MCF 10A (cell line): ENCODE measurements at regions of chrX and their contacts with region 1.

Region 1: DNA sequence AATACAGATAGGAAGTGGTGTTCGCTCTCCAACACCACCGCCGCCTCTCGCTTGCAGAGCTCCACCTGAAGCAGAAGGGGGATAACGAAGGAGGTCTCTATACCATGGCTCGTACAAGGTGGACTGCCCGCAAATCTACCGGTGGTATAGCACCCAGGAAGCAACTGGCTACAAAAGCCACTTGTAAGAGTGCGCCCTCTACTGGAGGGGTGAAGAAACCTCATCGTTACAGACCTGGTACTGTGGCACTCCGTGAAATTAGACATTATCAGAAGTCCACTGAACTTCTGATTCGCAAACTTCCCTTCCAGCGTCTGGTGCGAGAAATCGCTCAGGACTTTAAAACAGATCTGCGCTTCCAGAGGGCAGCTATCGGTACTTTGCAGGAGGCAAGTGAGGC is 5.2 kb upstream of the BMP15 start:
- DNase-seq: peak; percentile 34
- H3K4me3 Mint-ChIP-seq: no peak overlapping the region
- H3K27ac Mint-ChIP-seq: no peak overlapping the region
- H3K4me1 Mint-ChIP-seq: no peaks in the 10 kb centered on the region
- H3K27me3 Mint-ChIP-seq: peaks cover 13% of the 10 kb centered on the region
- CTCF ChIP-seq: peak; percentile 65

Region 2: DNA sequence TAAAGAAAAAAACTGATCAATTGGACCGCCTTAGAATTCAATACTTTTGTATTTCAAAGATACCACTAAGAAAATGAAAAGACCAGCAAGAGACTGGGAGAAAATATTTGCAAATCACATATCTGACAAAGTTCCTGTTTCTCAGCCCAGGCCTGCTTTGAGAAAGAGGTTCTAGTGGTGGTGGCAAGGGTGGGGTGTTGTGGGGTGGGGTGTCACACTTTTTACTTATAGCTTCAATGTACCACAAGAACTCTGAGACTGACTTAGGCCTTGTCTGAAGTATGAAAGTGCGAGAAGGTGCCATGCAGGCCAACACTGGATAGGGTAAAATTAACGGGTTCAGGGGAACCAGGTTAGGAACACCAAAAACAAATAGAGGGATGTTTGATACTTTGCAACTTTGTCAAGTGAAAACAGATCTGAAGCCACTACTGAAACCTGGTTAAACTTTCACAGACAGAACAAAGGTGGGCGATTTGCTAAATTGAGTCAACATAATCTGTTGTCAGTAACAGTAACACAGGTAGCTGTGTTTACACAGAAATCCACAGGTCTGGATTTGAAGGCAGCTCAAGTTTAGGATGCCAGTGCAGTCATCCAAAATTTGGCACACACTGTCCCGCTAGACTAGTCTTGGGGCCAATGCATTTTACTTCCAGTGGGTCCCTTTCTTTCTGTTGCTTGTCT is 523.5 kb before region 1 on chrX:
- CTCF ChIA-PET with region 1: no interaction called
- POLR2A ChIA-PET with region 1: no interaction called
- intact Hi-C with region 1: no loop called
- DNase-seq: no peak
- H3K4me3 Mint-ChIP-seq: no peak overlapping the region
- H3K27ac Mint-ChIP-seq: no peak overlapping the region
- H3K4me1 Mint-ChIP-seq: no peaks in the 10 kb centered on the region
- H3K27me3 Mint-ChIP-seq: peaks cover 81% of the 10 kb centered on the region
- CTCF ChIP-seq: no peak

Region 3: DNA sequence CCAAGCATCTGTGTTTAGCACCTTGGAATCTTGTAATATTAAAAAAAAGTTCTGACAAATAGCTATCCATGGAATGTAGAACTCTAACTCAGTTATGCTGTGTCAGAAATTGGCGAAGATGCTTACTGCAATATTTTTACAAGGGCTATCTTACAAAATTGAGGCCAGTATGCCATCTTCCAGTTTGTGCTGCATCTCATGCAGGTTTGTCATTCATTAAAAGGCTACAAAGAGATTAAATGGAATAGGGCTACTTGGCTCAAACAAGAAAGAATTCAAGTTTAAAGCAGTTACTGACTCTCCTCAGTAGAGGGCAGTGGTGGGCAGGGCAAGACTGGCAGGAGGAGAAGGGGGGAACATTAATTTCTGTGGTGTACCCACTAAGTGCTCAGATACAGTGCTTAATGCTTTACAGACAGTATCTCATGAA is 157.8 kb before region 1 on chrX:
- CTCF ChIA-PET with region 1: interaction called, 113 read pairs
- POLR2A ChIA-PET with region 1: interaction called, 3 read pairs
- intact Hi-C with region 1: loop called (anchors 1 kb)
- DNase-seq: peak; percentile 47
- H3K4me3 Mint-ChIP-seq: no peak overlapping the region
- H3K27ac Mint-ChIP-seq: no peak overlapping the region
- H3K4me1 Mint-ChIP-seq: no peaks in the 10 kb centered on the region
- H3K27me3 Mint-ChIP-seq: peaks cover 86% of the 10 kb centered on the region
- CTCF ChIP-seq: peak; percentile 85

Region 4: DNA sequence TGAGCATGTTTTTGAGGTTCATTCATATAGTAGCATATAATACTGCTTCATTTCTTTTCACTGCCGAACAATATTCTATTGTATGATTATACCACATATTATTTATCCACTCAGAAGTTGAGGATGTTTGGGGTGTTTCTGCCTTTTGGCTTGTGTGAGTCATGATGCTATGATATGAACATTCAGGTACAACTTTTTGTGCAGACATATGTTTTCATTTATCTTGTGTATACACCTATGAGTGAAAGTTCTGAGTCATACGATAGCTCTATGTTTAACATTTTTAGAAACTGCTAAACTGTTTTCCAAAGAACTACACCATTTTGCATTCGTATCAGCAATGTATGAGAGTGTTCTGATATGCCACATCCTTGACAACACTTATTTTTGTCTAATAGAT is 149.1 kb before region 1 on chrX:
- CTCF ChIA-PET with region 1: interaction called, 53 read pairs
- POLR2A ChIA-PET with region 1: no interaction called
- intact Hi-C with region 1: no loop called
- DNase-seq: no peak
- H3K4me3 Mint-ChIP-seq: no peak overlapping the region
- H3K27ac Mint-ChIP-seq: no peak overlapping the region
- H3K4me1 Mint-ChIP-seq: no peaks in the 10 kb centered on the region
- H3K27me3 Mint-ChIP-seq: peaks cover 64% of the 10 kb centered on the region
- CTCF ChIP-seq: no peak

Region 5: GRCh38 chrX:50893466-50893865 is 11.9 kb before region 1 on chrX:
- CTCF ChIA-PET with region 1: interaction called, 11 read pairs
- POLR2A ChIA-PET with region 1: interaction called, 4 read pairs
- intact Hi-C with region 1: no loop called
- DNase-seq: peak; percentile 24
- H3K4me3 Mint-ChIP-seq: no peak overlapping the region
- H3K27ac Mint-ChIP-seq: no peak overlapping the region
- H3K4me1 Mint-ChIP-seq: peaks cover 6% of the 10 kb centered on the region
- H3K27me3 Mint-ChIP-seq: peaks cover 29% of the 10 kb centered on the region
- CTCF ChIP-seq: no peak

Region 6: DNA sequence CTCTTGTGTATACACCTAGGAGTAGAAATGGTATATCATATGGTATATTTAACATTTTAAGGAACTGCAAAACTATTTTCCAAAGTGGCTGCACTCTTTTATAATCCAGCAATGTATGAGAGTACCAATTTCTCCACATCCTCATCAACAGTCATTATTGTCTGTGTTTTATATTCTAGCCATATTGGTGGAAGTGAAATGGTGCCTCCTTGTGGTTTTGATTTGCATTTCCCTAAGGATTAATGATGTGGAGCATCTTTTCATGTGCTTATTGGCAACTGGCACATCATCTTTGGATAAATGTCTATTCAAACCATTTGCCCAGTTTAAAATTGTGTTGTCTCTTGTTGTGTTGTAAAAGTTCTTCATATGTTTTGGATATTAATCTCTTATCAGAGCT is 14.8 kb after region 1 on chrX:
- CTCF ChIA-PET with region 1: interaction called, 13 read pairs
- POLR2A ChIA-PET with region 1: no interaction called
- intact Hi-C with region 1: no loop called
- DNase-seq: peak; percentile 42
- H3K4me3 Mint-ChIP-seq: no peak overlapping the region
- H3K27ac Mint-ChIP-seq: no peak overlapping the region
- H3K4me1 Mint-ChIP-seq: no peaks in the 10 kb centered on the region
- H3K27me3 Mint-ChIP-seq: peaks cover 64% of the 10 kb centered on the region
- CTCF ChIP-seq: peak; percentile 53

Region 7: DNA sequence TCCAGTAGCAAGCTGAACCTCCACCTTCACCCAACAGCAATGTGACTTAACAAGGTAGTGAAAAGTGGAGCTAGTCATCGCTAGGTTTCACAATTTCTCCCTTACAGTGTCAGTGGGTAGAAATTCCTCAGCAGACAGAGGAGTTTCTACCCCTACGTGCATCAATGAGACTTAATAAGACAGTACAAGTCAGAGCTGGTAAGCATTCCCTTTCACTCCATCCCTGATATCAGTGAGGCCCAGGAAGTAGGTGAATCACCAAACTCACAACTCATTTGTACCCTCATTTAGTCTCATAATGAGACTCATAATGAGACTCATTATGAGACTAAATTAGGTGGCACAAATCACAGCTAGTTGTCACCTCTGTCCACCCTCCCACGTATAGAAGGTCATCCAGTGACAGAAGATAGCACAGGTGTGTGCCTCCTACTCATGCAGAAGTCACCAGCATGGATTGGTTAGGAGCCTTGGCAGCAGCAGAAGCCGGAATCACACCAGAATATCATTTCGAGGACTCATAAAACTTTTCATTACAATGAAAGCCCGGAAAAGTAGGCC is 376.5 kb after region 1 on chrX:
- CTCF ChIA-PET with region 1: no interaction called
- POLR2A ChIA-PET with region 1: no interaction called
- intact Hi-C with region 1: no loop called
- DNase-seq: no peak
- H3K4me3 Mint-ChIP-seq: no peak overlapping the region
- H3K27ac Mint-ChIP-seq: no peak overlapping the region
- H3K4me1 Mint-ChIP-seq: no peaks in the 10 kb centered on the region
- H3K27me3 Mint-ChIP-seq: no peaks in the 10 kb centered on the region
- CTCF ChIP-seq: no peak